Panc1 (cell line): ENCODE measurements at regions of chr10 and their contacts with region 1.

Region 1: GRCh38 chr10:125928928-125929585 is 32.7 kb downstream of the FANK1 start:
- DNase-seq: no peak
- ATAC-seq: no peak
- H3K4me3 ChIP-seq: no peak overlapping the region
- H3K27ac ChIP-seq: peak overlapping the region; percentile 35
- H3K4me1 ChIP-seq: peaks cover 7% of the 10 kb centered on the region; the same call in 1 of the 2 replicates
- H3K27me3 ChIP-seq: no peaks in the 10 kb centered on the region
- CTCF ChIP-seq: no peak

Region 2: DNA sequence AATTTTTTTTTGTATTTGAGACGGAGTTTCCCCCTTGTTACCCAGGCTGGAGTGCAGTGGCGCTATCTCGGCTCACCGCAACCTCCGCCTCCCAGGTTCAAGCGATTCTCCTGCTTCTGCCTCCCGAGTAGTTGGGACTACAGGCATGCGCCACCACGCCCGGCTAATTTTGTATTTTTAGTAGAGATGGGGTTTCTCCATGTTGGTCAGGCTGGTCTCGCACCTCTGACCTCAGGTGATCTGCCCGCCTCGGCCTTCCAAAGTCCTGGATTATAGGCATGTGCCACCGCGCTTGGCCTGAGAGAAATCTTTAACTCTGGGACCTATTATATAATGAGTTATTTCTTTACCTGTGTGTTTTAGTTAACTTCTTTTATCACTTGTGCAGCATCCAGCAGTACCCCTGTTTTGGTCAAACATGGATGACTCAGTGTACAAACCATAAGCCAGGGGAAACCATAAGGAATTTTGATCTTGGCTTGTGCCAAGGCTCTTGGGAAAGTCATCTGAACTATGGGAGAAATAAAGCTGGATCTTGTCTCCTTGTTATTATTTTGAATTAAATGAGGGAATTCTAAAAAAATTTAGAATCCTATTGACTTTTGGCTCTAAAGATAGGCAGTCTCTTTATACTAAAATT is 1010.7 kb before region 1 on chr10:
- CTCF ChIA-PET with region 1: no interaction called
- POLR2A ChIA-PET with region 1: no interaction called
- in situ Hi-C with region 1: no loop called
- intact Hi-C with region 1: no loop called
- DNase-seq: no peak
- ATAC-seq: no peak
- H3K4me3 ChIP-seq: peak overlapping the region; percentile 85
- H3K27ac ChIP-seq: peak overlapping the region; percentile 84
- H3K4me1 ChIP-seq: peaks cover 22% of the 10 kb centered on the region
- H3K27me3 ChIP-seq: no peaks in the 10 kb centered on the region
- CTCF ChIP-seq: no peak

Region 3: GRCh38 chr10:125707541-125708468 is 221.3 kb before region 1 on chr10:
- CTCF ChIA-PET with region 1: no interaction called
- POLR2A ChIA-PET with region 1: no interaction called
- in situ Hi-C with region 1: no loop called
- intact Hi-C with region 1: no loop called
- DNase-seq: no peak
- ATAC-seq: peak; percentile 93
- H3K4me3 ChIP-seq: no peak overlapping the region
- H3K27ac ChIP-seq: peak overlapping the region; percentile 72
- H3K4me1 ChIP-seq: peaks cover 35% of the 10 kb centered on the region
- H3K27me3 ChIP-seq: no peaks in the 10 kb centered on the region
- CTCF ChIP-seq: no peak

Region 4: GRCh38 chr10:125850766-125851731 is 78.0 kb before region 1 on chr10:
- CTCF ChIA-PET with region 1: interaction called, 13 read pairs
- POLR2A ChIA-PET with region 1: no interaction called
- in situ Hi-C with region 1: no loop called
- intact Hi-C with region 1: no loop called
- DNase-seq: no peak
- ATAC-seq: no peak
- H3K4me3 ChIP-seq: no peak overlapping the region
- H3K27ac ChIP-seq: no peak overlapping the region
- H3K4me1 ChIP-seq: no peaks in the 10 kb centered on the region
- H3K27me3 ChIP-seq: no peaks in the 10 kb centered on the region
- CTCF ChIP-seq: no peak

Region 5: DNA sequence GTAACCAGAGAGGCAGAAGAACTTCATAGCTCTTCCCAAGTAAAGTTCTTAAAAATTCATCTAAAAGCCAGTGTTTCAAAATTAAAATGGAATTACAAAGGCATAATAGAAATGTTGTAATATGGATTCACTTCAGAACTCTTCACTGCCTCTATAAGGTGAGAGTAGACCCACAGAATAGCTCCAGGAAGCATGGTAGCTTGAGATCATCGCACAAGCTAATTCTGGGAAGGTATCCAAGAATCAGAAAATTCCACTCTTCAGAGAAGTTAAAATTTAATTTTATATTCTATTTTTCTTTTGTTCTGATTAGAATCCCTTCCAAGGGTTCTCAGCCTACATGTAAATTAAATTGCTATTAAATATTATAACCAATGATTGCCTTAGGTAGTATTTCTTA is 46.5 kb before region 1 on chr10:
- CTCF ChIA-PET with region 1: interaction called, 15 read pairs
- POLR2A ChIA-PET with region 1: no interaction called
- in situ Hi-C with region 1: no loop called
- intact Hi-C with region 1: no loop called
- DNase-seq: no peak
- ATAC-seq: no peak
- H3K4me3 ChIP-seq: no peak overlapping the region
- H3K27ac ChIP-seq: peak overlapping the region; percentile 97
- H3K4me1 ChIP-seq: peaks cover 68% of the 10 kb centered on the region
- H3K27me3 ChIP-seq: no peaks in the 10 kb centered on the region
- CTCF ChIP-seq: no peak

Region 6: DNA sequence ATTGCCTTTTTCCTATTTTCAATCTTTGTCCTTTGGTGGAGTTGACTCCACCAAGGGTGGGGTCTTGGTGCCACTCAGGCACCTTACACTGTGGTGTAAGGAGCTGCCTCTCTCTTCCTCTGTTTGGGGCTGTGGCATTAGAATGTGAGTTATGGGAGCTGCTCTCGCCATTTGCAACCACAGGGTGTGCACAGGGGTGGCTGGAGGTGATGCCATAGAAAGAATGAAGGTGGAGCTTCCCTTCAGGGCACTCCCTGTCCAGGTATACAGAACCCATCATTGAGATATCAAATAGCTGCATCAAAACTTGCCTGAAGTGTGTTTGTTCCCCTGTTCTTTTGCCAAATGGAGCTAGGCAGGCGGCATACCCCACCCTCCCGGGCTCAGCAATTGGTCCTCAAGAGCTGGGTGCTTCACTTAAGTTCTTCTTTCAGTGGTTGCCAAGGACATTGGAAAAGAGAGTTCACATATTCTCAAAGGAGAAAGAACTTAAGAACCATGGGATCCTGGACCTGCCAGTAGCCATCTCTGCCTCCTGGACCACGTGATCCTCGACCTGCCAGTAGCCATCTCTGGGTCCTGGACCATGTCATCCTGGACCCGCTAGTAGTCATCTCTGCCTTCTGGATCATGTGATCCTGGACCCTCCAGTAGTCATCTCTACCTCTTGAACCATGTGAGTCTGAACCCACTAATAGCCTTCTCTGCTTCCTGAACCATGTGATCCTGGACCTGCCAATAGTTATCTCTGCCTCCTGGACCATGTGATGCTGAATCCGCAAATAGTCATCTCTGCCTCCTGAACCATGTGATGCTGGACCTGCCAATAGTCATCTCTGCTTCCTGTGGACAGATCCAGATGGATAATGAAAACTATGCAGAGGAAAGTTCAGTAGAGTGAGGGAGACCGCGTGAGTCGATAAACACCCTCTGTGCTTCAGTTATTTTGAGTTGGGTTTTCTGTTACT is 282.2 kb after region 1 on chr10:
- CTCF ChIA-PET with region 1: interaction called, 17 read pairs
- POLR2A ChIA-PET with region 1: no interaction called
- in situ Hi-C with region 1: no loop called
- intact Hi-C with region 1: no loop called
- DNase-seq: no peak
- ATAC-seq: no peak
- H3K4me3 ChIP-seq: no peak overlapping the region
- H3K27ac ChIP-seq: no peak overlapping the region
- H3K4me1 ChIP-seq: peaks cover 5% of the 10 kb centered on the region
- H3K27me3 ChIP-seq: peaks cover 4% of the 10 kb centered on the region; the same call in 1 of the 2 replicates
- CTCF ChIP-seq: no peak